Endothelial cell of umbilical vein (primary cell): ENCODE measurements at regions of chr19 and their contacts with region 1.

Region 1: DNA sequence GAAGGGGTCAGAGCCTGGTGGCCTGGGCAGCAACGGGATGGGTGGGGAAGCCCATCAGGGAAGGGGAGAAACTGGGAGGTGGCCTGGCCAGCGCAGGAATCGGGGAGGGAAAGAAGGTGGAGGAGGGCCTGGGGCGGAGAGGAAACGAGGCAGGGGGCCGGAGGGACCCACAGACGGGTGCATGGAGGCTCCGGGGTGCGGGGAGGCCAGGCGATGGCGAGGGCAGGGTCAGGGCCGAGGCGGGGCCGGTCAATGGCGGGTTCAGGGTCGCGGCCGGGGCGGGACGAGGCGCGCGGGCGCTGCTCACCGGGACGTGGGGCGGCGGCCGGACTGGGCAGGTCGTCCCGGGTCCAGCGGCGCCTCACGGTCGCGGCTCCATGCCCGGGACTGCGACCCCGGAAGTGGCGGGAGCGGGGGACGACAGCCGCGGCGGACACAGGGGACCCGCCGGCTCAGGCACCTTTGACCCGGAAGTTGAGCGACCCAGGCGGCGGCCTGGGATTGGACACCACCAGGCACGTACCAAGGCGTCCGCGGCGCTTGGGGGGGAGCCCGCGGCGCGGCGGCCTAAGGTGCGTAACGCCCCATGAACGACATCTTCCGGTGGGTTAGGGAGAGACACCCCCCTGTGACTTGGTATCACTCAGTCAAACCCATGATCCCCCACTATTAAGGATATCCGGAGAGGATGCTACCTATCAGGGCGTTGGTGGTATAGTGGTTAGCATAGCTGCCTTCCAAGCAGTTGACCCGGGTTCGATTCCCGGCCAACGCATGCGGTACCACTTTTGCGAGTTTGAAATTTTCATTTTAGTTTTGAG is at the start of gene DPP9:
- DNase-seq: peak; percentile 98
- H3K4me3 ChIP-seq: peak within 1 kb of the TSS; percentile 49 to 88 (median 54)
- H3K27ac ChIP-seq: peak within 1 kb of the TSS; percentile 62
- H3K4me1 ChIP-seq: peaks cover 15% of the 10 kb centered on the region
- H3K27me3 ChIP-seq: no peaks in the 10 kb centered on the region
- CTCF ChIP-seq: peak in 1 of 2 donors; percentile 4
- POLR2A ChIP-seq: peak; percentile 61
- total RNA-seq, gene DPP9: 87.6 and 98.0 TPM in 2 replicates

Region 2: DNA sequence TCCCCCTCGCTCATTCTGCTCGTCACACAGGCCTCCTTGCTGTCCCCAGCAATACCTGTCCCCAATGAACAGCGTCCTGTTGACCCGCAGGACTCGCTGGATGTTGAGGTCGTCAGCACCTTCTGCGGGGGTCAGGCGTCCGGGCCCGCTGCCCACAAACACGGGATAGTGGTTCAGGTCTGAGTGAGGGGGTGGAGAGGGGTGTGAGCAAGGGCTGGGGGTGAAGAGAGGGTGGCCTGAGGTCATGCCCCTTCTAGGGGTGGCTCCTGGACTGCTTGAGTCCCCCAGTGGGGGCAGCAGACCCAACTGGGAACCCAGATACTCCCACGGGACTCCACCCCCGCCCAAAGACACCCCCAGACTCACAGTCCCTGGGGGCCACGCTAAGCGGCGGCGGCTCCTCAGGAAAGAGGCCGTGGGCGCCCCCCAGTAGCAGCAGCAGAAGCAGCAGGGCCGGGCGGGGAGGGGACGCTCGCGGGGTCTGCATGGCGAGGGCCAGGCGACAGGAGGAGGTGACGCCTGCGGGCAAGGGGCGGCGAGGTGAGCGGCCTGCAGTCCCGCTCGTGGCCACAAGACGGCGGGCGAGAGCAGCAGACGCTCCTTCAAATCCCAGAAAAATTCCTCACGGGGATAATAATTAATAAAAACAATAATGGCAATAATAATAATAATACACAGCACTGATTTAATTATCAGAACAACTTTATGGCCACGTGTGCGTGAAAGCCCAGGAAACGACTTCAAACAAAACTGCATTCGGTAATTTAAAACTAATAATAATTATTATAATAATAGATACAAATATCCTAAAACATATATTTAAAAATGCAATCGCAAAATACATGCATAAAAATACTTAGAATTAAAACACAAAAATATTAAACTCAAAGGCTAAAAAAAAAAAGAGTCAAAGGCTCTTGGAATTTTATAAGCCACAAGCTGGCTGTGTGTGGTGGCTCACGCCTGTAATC is 165.3 kb before region 1 on chr19:
- CTCF ChIA-PET with region 1: no interaction called
- POLR2A ChIA-PET with region 1: no interaction called
- dilution Hi-C with region 1: no loop called
- intact Hi-C with region 1: loop called (anchors 5 kb)
- DNase-seq: peak; percentile 61
- H3K4me3 ChIP-seq: peak overlapping the region in 2 of 3 experiments; percentile 37 to 76
- H3K27ac ChIP-seq: peak overlapping the region; percentile 77
- H3K4me1 ChIP-seq: peaks cover 26% of the 10 kb centered on the region
- H3K27me3 ChIP-seq: no peaks in the 10 kb centered on the region
- CTCF ChIP-seq: peak; percentile 91 to 93
- POLR2A ChIP-seq: no peak

Region 3: GRCh38 chr19:4669723-4670480 is 53.7 kb before region 1 on chr19 and contains the start of gene MYDGF:
- CTCF ChIA-PET with region 1: interaction called, 4 read pairs
- POLR2A ChIA-PET with region 1: no interaction called
- dilution Hi-C with region 1: no loop called
- intact Hi-C with region 1: loop called (anchors 2 kb)
- DNase-seq: peak; percentile 80
- H3K4me3 ChIP-seq: peak within 1 kb of the TSS; percentile 74 to 97 (median 80)
- H3K27ac ChIP-seq: peak within 1 kb of the TSS; percentile 44
- H3K4me1 ChIP-seq: peaks cover 13% of the 10 kb centered on the region
- H3K27me3 ChIP-seq: no peaks in the 10 kb centered on the region
- CTCF ChIP-seq: no peak
- POLR2A ChIP-seq: peak; percentile 80
- total RNA-seq, gene MYDGF: 187 and 191 TPM in 2 replicates

Region 4: GRCh38 chr19:4707322-4707721 is 16.3 kb before region 1 on chr19:
- CTCF ChIA-PET with region 1: no interaction called
- POLR2A ChIA-PET with region 1: no interaction called
- dilution Hi-C with region 1: no loop called
- intact Hi-C with region 1: no loop called
- DNase-seq: no peak
- H3K4me3 ChIP-seq: no peak overlapping the region
- H3K27ac ChIP-seq: no peak overlapping the region
- H3K4me1 ChIP-seq: no peaks in the 10 kb centered on the region
- H3K27me3 ChIP-seq: no peaks in the 10 kb centered on the region
- CTCF ChIP-seq: no peak
- POLR2A ChIP-seq: no peak

Region 5: DNA sequence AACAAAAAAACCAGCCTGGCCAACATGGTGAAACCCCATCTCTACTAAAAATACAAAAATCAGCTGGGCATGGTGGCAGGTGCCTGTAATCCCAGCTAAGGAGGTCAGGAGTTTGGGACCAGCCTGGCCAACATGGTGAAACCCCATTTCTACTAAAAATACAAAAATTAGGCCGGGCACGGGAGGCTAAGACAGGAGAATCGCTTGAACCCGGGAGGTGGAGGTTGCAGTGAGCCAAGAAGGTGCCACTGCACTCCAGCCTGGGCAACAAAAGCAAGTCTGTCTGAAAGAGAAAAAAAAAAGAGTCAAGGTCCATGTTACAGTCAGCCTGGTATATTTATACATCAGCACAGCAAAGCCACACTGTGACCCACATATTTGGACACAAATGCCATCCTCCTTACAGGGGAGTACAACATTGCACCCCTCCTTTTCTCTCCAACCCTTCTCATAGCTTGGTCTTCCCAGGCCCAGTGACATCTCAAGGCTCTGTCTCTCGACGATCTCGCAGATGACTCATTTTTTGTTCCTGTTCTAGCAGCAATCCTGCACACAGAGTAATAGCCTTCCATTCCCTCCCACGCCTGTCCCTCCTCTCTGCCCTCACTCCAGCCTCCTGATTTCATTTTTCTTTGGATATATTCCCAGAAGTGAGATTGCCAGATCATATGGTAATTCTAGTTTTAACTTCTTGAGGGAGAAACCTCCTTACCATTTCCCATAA is 21.0 kb after region 1 on chr19:
- CTCF ChIA-PET with region 1: no interaction called
- POLR2A ChIA-PET with region 1: no interaction called
- dilution Hi-C with region 1: no loop called
- intact Hi-C with region 1: no loop called
- DNase-seq: peak; percentile 51
- H3K4me3 ChIP-seq: no peak overlapping the region
- H3K27ac ChIP-seq: no peak overlapping the region
- H3K4me1 ChIP-seq: no peaks in the 10 kb centered on the region
- H3K27me3 ChIP-seq: peaks cover 0 to 5% of the 10 kb centered on the region in 2 experiments
- CTCF ChIP-seq: no peak
- POLR2A ChIP-seq: no peak

Region 6: GRCh38 chr19:4791170-4792018 is 67.8 kb after region 1 on chr19 and contains the start of gene FEM1A:
- CTCF ChIA-PET with region 1: interaction called, 362 read pairs
- POLR2A ChIA-PET with region 1: interaction called, 4 read pairs
- dilution Hi-C with region 1: no loop called
- intact Hi-C with region 1: loop called (anchors 1 kb)
- DNase-seq: peak; percentile 100
- H3K4me3 ChIP-seq: peak within 1 kb of the TSS; percentile 25 to 88 (median 45)
- H3K27ac ChIP-seq: peak within 1 kb of the TSS; percentile 69
- H3K4me1 ChIP-seq: peaks cover 8% of the 10 kb centered on the region
- H3K27me3 ChIP-seq: no peaks in the 10 kb centered on the region
- CTCF ChIP-seq: peak; percentile 98 to 100
- POLR2A ChIP-seq: peak; percentile 72
- total RNA-seq, gene FEM1A: 11.4 TPM in 2 replicates

Region 7: DNA sequence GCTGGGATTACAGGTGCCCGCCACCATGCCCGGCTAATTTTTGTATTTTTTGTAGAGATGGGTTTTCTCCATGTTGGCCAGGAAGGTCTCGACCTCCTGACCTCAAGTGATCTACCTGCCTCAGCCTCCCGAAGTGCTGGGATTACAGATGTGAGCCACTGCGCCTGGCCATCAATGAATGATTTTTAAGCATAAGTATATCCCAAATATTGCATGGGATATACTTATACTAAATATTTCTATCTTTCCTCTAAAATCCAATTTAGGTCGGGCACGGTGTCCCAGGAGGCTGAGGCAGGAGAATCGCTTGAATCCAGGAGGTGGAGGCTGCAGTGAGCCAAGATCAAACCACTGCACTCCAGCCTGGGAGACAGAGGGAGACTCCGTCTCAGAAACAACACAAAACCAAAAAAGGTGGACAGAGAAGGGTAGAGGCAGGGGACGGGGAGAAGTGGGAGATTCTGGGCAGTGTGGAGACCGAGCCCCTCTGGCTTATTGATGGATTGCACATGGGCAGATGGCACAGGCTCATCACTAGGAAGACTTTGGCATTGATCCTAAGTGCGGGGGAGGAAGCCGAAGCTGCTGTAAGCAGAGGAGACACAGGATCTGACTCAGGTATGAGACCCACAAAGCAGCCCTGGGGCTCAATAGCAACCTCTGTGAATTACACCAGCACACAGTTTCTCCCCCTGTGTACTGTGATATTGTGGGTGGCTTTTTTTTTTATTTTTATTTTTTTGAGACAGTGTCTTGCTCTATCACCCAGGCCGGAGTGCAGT is 165.6 kb after region 1 on chr19:
- CTCF ChIA-PET with region 1: no interaction called
- POLR2A ChIA-PET with region 1: no interaction called
- dilution Hi-C with region 1: no loop called
- intact Hi-C with region 1: no loop called
- DNase-seq: no peak
- H3K4me3 ChIP-seq: no peak overlapping the region
- H3K27ac ChIP-seq: no peak overlapping the region
- H3K4me1 ChIP-seq: no peaks in the 10 kb centered on the region
- H3K27me3 ChIP-seq: no peaks in the 10 kb centered on the region
- CTCF ChIP-seq: no peak
- POLR2A ChIP-seq: no peak

Region 8: DNA sequence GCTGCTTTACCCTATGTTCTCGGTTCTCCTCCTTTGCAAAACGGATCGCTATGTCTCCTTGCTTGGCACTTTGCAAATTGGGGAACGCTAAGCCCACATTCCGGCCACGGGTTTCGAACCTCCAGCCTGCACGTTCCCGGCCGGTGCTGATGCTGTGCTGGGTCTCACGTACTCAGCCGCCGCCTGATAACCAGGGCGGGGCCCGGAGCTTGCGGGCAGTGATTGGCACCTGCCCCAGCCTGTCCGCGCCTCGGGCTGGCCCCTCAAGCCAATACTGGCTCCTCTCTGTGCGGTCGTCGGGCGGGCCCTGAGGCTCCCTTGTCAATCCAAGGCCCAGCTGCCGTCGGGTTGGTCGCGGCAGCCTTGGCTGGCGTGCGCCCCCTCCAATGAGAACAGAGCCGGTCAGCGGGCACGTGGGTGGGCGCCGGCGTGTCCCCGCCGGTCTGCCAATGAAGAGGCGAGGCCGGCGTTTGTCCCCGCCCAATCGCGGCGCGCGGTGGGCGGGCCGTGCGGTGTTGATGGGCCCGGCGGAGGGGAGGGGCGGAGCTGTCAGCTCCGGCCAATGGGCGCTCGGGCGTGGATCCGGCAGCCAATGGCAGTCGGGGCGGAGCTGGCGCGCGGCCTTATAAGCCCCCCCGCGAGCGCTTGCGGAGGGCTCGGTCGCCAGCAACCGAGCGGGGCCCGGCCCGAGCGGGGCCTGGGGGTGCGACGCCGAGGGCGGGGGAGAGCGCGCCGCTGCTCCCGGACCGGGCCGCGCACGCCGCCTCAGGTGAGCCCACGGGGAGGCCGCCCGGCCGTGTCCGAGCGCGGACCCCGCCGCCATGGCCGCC is 245.1 kb after region 1 on chr19 and contains the start of gene KDM4B:
- CTCF ChIA-PET with region 1: no interaction called
- POLR2A ChIA-PET with region 1: no interaction called
- dilution Hi-C with region 1: no loop called
- intact Hi-C with region 1: loop called (anchors 5 kb)
- DNase-seq: peak; percentile 100
- H3K4me3 ChIP-seq: peak within 1 kb of the TSS; percentile 45 to 54 (median 48)
- H3K27ac ChIP-seq: no peak within 1 kb of the TSS
- H3K4me1 ChIP-seq: peaks cover 23% of the 10 kb centered on the region
- H3K27me3 ChIP-seq: no peaks in the 10 kb centered on the region
- CTCF ChIP-seq: no peak
- POLR2A ChIP-seq: peak; percentile 85
- total RNA-seq, gene KDM4B: 30.8 and 37.2 TPM in 2 replicates